ENCODE measurements at regions of chr3 and their contacts with region 1.

Region 1: DNA sequence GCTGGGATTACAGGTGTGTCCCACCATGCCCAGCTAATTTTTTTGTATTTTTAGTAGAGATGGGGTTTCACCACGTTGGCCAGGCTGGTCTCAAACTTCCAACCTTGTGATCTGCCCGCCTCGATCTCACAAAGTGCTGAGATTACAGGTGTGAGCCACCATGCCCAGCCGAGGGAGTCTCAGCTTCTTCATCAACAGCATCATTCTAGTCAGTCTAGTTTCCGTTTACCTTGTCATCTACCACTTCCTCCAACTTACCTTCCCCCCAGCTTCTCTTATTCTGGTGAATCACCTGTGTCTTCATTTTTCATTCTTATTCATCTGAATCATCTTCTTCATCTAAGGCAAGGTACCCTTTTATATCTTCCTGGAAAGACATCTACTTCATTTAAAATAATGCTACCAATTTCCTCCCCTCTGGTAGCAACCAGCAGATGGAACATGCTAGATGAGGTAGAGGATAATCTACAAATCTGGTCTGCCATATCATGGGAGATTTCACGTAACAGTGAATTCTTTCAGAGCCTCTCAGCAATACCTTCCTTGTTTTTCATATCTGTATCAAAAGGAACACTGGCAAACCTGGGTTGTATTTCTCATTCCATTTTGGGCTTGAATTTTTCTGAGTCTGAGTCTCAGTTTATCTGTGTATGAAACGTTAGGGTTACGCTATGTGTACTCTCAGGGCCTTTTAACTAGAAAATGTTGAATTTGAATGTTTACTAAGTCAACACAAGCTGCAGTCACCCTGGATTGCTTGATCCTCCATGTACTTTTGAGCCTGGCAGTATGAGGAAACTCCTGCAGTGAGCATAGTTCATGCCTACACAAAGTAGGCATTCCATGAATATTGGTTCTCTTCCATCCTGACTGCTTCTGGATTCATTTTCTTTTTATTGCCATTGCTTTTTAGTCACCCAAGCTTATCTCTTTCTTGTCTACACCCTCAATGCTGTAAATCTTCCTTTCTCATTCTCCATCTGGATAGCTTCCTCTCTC is 16.8 kb downstream of the LPP start:
- DNase-seq: peak; percentile 89
- H3K4me3 Mint-ChIP-seq: peak overlapping the region; percentile 39
- H3K27ac Mint-ChIP-seq: peak overlapping the region; percentile 86
- H3K4me1 Mint-ChIP-seq: peaks cover 64% of the 10 kb centered on the region
- H3K27me3 Mint-ChIP-seq: no peaks in the 10 kb centered on the region

Region 2: GRCh38 chr3:187974871-187975271 is 195.9 kb before region 1 on chr3:
- CTCF ChIA-PET with region 1: no interaction called
- intact Hi-C with region 1: loop called (anchors 1 kb)
- DNase-seq: no peak
- H3K4me3 Mint-ChIP-seq: peak overlapping the region; percentile 50
- H3K27ac Mint-ChIP-seq: peak overlapping the region; percentile 82
- H3K4me1 Mint-ChIP-seq: peaks cover 50% of the 10 kb centered on the region
- H3K27me3 Mint-ChIP-seq: no peaks in the 10 kb centered on the region

Region 3: GRCh38 chr3:188253800-188254452 is 83.2 kb after region 1 on chr3:
- CTCF ChIA-PET with region 1: no interaction called
- intact Hi-C with region 1: loop called (anchors 1 kb)
- DNase-seq: peak; percentile 54
- H3K4me3 Mint-ChIP-seq: no peak overlapping the region
- H3K27ac Mint-ChIP-seq: peak overlapping the region; percentile 76
- H3K4me1 Mint-ChIP-seq: peaks cover 44% of the 10 kb centered on the region
- H3K27me3 Mint-ChIP-seq: no peaks in the 10 kb centered on the region

Region 4: DNA sequence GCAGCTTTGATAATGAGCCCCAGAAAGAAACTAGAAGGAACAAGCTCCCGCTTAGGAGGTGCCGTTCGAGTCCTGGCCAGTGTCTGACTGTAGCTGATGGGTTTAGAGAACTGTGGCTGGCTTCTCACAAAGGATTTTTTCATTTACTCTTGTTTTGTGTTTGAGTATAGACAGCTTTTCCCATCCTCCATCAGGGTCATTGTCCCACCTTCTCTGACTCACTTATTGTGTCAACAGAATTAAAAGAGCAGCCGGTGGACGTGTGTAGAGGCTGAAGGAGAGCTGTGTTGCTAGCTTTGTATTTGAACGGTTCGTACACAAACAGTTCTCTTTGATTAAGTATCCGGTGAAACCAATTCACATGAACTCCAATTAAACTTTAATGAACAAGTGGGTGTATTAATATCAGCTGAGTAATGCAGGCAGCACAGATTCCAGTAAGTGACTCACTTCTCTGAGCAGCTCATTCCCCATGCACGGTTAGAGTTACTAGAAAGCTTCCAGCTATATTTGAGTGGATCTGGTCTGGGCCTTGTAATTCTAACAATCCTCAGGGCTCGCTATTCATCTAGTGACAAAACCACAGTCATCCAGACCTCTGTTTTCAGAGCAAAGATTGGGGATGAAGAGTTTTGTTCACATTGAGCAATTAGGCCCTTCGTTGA is 124.2 kb after region 1 on chr3:
- CTCF ChIA-PET with region 1: interaction called, 4 read pairs
- intact Hi-C with region 1: loop called (anchors 1 kb)
- DNase-seq: peak; percentile 49
- H3K4me3 Mint-ChIP-seq: no peak overlapping the region
- H3K27ac Mint-ChIP-seq: peak overlapping the region; percentile 69
- H3K4me1 Mint-ChIP-seq: peaks cover 85% of the 10 kb centered on the region
- H3K27me3 Mint-ChIP-seq: no peaks in the 10 kb centered on the region

Region 5: GRCh38 chr3:188339410-188340295 is 168.9 kb after region 1 on chr3:
- CTCF ChIA-PET with region 1: no interaction called
- intact Hi-C with region 1: loop called (anchors 1 kb)
- DNase-seq: peak; percentile 76
- H3K4me3 Mint-ChIP-seq: peak overlapping the region; percentile 59
- H3K27ac Mint-ChIP-seq: peak overlapping the region; percentile 92
- H3K4me1 Mint-ChIP-seq: peaks cover 34% of the 10 kb centered on the region
- H3K27me3 Mint-ChIP-seq: no peaks in the 10 kb centered on the region

Region 6: GRCh38 chr3:188584162-188584529 is 413.4 kb after region 1 on chr3:
- CTCF ChIA-PET with region 1: no interaction called
- intact Hi-C with region 1: loop called (anchors 5 kb)
- DNase-seq: peak; percentile 61
- H3K4me3 Mint-ChIP-seq: no peak overlapping the region
- H3K27ac Mint-ChIP-seq: no peak overlapping the region
- H3K4me1 Mint-ChIP-seq: peaks cover 15% of the 10 kb centered on the region
- H3K27me3 Mint-ChIP-seq: no peaks in the 10 kb centered on the region